ENCODE measurements at regions of chr2 and their contacts with region 1.

Region 1: GRCh38 chr2:118122594-118123281 is 34.5 kb downstream of the INSIG2 start:
- DNase-seq: no peak
- ATAC-seq: peak; percentile 61
- H3K4me3 ChIP-seq: no peak overlapping the region
- H3K27ac ChIP-seq: peak overlapping the region; percentile 36 to 68
- H3K4me1 ChIP-seq: peaks cover 0 to 6% of the 10 kb centered on the region in 2 donors
- H3K27me3 ChIP-seq: no peaks in the 10 kb centered on the region

Region 2: GRCh38 chr2:118088051-118089024 is 34.4 kb before region 1 on chr2 and contains the start of gene INSIG2:
- intact Hi-C with region 1: loop called in 1 of 2 experiments (anchors 2 kb)
- DNase-seq: peak; percentile 96 to 97
- ATAC-seq: peak; percentile 98
- H3K4me3 ChIP-seq: peak within 1 kb of the TSS; percentile 62 to 77
- H3K27ac ChIP-seq: peak within 1 kb of the TSS in 1 of 2 donors; percentile 8
- H3K4me1 ChIP-seq: peaks cover 0 to 4% of the 10 kb centered on the region in 2 donors
- H3K27me3 ChIP-seq: no peaks in the 10 kb centered on the region
- total RNA-seq, gene INSIG2: 34.2 to 43.2 TPM

Region 3: DNA sequence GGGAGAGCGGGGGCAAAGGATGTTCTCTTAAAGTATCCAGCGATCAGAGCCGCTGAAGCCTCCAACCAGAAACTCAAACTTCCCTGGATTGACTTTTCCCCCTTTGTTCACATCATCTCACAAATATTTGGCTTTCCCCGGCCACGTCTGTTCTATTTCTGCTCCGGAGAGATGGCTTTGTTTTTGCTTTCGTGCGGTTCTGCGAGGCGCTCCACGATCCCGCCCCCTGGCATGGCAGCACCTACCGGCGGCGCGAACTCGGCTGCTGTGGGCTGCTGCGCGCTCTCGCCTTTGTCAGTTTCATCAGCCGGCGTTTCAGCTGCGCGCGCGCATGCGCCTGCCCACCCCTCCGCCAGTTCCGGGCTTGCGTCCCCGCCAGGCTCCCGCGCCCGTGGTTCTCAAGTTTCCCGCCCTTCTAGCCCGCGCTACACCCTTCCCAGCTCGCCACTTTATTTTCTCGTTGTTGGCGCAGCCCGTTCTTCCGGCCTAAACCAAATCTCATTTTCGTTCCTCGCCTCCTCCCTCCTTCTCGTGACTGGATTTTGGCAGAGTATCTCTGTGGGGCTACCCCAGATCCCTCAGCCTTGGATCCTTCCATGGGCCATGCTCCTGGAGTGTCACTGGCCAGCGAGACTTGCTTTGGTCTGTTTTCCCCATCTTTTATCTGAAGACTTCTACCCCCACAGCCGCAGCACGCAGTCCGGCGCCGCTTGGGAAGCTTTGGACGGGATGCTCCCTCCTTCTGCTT is 63.5 kb after region 1 on chr2:
- intact Hi-C with region 1: loop called in 1 of 2 experiments (anchors 5 kb)
- DNase-seq: peak; percentile 95 to 97
- ATAC-seq: peak; percentile 96
- H3K4me3 ChIP-seq: peak overlapping the region; percentile 58
- H3K27ac ChIP-seq: peak overlapping the region; percentile 91 to 93
- H3K4me1 ChIP-seq: no peaks in the 10 kb centered on the region
- H3K27me3 ChIP-seq: no peaks in the 10 kb centered on the region

Measured in aorta (tissue), 5 donors.